ENCODE measurements at regions of chr16 and their contacts with region 1.

Region 1: GRCh38 chr16:59198487-59198886 is 464.4 kb upstream of the GOT2 start:
- DNase-seq: peak; percentile 95
- H3K4me3 ChIP-seq: no peak overlapping the region
- H3K27ac ChIP-seq: peak overlapping the region; percentile 51
- H3K4me1 ChIP-seq: peaks cover 25% of the 10 kb centered on the region
- H3K27me3 ChIP-seq: no peaks in the 10 kb centered on the region
- CTCF ChIP-seq: no peak
- POLR2A ChIP-seq: peak; percentile 72

Region 2: DNA sequence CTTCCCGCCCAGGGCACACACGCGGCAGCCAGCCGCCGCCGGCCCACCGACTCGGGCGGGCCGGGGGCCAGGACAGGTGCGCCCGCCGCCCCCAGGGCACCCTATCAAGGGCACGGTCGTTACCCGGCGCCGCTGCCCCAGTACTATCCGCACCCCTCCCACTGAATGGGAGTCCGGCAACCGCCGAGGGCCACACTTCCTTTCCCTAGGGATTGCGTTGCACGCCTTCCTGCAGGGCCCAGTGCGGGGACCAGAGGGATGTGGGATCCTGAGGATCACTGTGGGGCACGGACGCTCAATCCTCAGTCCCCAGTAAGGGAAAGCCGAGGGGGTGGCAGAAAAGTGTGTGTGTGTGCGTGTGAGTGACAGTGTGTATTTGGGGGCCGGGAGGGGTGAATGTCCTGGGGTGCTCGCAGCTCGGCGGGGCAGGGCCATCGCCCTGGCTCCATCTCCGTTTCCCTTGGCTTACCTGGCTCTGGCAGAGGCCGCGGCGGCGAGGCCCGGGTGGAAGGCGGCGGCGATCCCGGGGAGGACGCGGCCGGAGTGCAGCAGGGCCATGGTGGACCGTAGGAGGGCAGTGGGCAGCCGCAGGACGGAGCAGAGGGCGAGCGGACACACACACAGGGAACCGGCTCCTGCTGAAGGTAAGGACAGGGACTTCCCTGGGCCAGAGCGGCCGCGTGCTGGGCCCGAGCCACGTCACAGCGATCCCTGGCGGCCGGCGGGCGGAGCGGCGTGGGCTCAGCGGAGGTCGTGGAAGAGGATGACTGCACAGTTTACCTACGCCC is 464.6 kb before region 1 on chr16 and contains the start of gene GOT2:
- CTCF ChIA-PET with region 1: no interaction called
- POLR2A ChIA-PET with region 1: interaction called, 10 read pairs
- dilution Hi-C with region 1: no loop called
- intact Hi-C with region 1: no loop called
- DNase-seq: peak; percentile 93
- H3K4me3 ChIP-seq: peak within 1 kb of the TSS; percentile 63 to 84 (median 72)
- H3K27ac ChIP-seq: peak within 1 kb of the TSS; percentile 98
- H3K4me1 ChIP-seq: peaks cover 26% of the 10 kb centered on the region
- H3K27me3 ChIP-seq: no peaks in the 10 kb centered on the region
- CTCF ChIP-seq: peak; percentile 97 to 98
- POLR2A ChIP-seq: peak; percentile 73
- total RNA-seq, gene GOT2: 120 and 127 TPM in 2 replicates

Region 3: DNA sequence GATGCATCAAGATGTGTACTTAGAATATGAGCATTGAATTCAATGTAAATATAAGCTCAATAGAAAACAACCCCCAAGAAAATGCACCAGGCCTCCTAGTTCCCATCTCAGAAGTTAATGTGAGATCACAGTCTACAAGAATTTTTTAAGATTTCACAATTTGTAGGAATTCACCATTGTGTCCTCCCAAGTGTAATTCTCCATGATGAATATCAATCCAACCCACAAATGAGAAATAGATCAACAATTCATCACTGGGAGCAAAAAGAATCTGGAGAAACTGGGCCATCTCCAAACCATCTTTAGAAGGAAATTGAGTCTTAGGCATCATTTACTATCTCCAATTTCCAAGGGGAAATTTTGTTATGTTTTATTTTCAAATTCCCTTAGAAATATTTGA is 153.9 kb before region 1 on chr16:
- CTCF ChIA-PET with region 1: no interaction called
- POLR2A ChIA-PET with region 1: interaction called, 3 read pairs
- dilution Hi-C with region 1: no loop called
- intact Hi-C with region 1: loop called (anchors 1 kb)
- DNase-seq: no peak
- H3K4me3 ChIP-seq: no peak overlapping the region
- H3K27ac ChIP-seq: no peak overlapping the region
- H3K4me1 ChIP-seq: peaks cover 20% of the 10 kb centered on the region
- H3K27me3 ChIP-seq: no peaks in the 10 kb centered on the region
- CTCF ChIP-seq: no peak
- POLR2A ChIP-seq: no peak

Region 4: DNA sequence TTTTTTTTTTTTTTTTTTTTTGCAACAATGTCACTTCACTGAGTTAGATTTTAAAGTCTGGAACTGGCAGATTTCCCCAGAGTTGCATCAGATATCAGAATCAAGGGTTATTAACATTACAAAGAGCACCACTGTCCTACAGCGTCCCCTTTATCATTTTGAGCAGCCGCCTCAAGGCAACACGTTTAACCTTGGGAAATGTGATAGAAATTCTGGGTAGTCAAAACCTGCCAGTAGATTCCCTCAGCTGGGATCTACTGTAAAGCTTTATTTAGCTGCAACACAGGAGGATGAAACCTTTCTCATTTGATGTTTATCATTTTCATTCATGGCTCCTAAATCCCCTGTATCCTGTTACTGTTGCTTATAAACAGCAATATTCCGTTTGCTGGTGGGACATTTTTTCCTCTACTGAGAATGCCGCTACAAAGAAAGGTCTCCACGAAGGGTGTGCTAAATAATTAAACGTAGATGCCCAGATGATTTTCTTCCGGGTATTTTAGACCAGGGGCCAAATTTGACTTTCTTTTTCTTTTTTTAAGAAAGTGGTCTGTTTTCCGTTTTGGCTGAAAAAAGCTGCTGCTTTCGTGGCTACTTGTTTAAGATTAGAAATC is 28.3 kb before region 1 on chr16:
- CTCF ChIA-PET with region 1: no interaction called
- POLR2A ChIA-PET with region 1: no interaction called
- dilution Hi-C with region 1: no loop called
- intact Hi-C with region 1: no loop called
- DNase-seq: no peak
- H3K4me3 ChIP-seq: no peak overlapping the region
- H3K27ac ChIP-seq: no peak overlapping the region
- H3K4me1 ChIP-seq: no peaks in the 10 kb centered on the region
- H3K27me3 ChIP-seq: peaks cover 0 to 3% of the 10 kb centered on the region in 2 experiments
- CTCF ChIP-seq: no peak
- POLR2A ChIP-seq: no peak

Region 5: DNA sequence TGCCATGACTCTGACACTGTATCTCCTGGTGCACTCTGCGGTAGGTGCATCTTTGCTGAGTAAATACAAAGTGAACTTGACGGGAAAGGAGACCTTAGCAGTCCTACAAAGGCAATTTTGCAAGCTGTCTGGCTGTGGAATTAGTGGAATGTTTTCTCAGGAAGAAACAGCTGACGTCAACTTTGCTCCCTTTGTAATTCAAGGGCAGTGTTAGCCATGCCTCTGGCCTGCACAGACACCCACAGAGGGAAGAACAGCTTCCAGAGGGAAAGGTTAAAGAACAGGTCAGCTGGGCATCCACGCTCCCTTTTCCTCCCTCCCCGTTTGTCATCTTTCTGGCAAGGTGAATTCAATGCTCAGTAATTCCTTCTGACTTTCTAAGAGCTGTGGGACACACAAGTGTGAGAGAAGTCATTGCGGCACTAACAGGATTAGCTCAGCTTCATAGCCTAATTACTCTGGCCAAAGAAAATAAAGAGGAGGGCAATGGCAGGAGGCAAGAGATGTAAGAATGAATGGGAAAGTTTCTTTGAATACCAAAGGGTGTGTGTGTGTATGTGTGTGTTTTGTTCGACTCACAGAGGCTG is 12.6 kb after region 1 on chr16:
- CTCF ChIA-PET with region 1: interaction called, 25 read pairs
- POLR2A ChIA-PET with region 1: interaction called, 13 read pairs
- dilution Hi-C with region 1: no loop called
- intact Hi-C with region 1: loop called (anchors 1 kb)
- DNase-seq: peak; percentile 97
- H3K4me3 ChIP-seq: peak overlapping the region in 1 of 3 experiments; percentile 35
- H3K27ac ChIP-seq: peak overlapping the region; percentile 92
- H3K4me1 ChIP-seq: peaks cover 33% of the 10 kb centered on the region
- H3K27me3 ChIP-seq: no peaks in the 10 kb centered on the region
- CTCF ChIP-seq: no peak
- POLR2A ChIP-seq: no peak

Measured in endothelial cell of umbilical vein (primary cell).